ENCODE measurements at regions of chr9 and their contacts with region 1.

Region 1: GRCh38 chr9:74078647-74079046 is 418.5 kb upstream of the RORB start:
- DNase-seq: no peak
- H3K4me3 ChIP-seq: no peak overlapping the region
- H3K27ac ChIP-seq: no peak overlapping the region
- H3K4me1 ChIP-seq: no peaks in the 10 kb centered on the region
- H3K27me3 ChIP-seq: no peaks in the 10 kb centered on the region
- CTCF ChIP-seq: no peak
- EP300 ChIP-seq: no peak
- POLR2A ChIP-seq: no peak

Region 2: GRCh38 chr9:74132986-74133385 is 54.3 kb after region 1 on chr9:
- in situ Hi-C with region 1: loop called in 1 of 4 experiments (anchors 10 kb)
- intact Hi-C with region 1: no loop called
- DNase-seq: no peak
- H3K4me3 ChIP-seq: no peak overlapping the region
- H3K27ac ChIP-seq: no peak overlapping the region
- H3K4me1 ChIP-seq: no peaks in the 10 kb centered on the region
- H3K27me3 ChIP-seq: no peaks in the 10 kb centered on the region
- CTCF ChIP-seq: no peak
- EP300 ChIP-seq: no peak
- POLR2A ChIP-seq: no peak